ENCODE measurements at regions of chr17 and their contacts with region 1.

Region 1: DNA sequence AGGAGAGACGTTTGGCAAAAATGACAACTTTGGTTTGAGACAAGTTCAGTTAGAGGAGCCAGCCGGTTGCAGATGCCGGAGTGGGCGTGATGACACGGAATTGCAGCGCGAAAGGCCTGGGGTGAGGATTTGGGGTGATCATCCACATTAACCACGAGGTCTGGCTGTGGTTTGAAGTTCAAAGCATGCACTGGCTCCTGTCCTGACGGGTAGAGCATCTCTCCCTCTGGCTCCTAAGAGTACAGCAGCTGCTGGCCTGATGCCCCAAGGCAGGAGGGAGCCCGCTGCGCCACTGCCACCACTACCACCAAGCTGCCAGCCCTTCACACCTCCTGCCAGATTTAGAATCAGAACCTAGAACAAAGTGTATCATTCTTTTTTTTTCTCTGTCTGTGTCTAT is 3.7 kb downstream of the RHBDL3 start:
- DNase-seq: no peak
- H3K4me3 ChIP-seq: no peak overlapping the region
- H3K27ac ChIP-seq: no peak overlapping the region
- H3K4me1 ChIP-seq: peaks cover 10% of the 10 kb centered on the region
- H3K27me3 ChIP-seq: peaks cover 47 to 56% of the 10 kb centered on the region in 2 experiments
- CTCF ChIP-seq: no peak
- POLR2A ChIP-seq: no peak

Region 2: GRCh38 chr17:32285746-32286517 is 16.6 kb after region 1 on chr17:
- CTCF ChIA-PET with region 1: interaction called, 14 read pairs
- POLR2A ChIA-PET with region 1: no interaction called
- dilution Hi-C with region 1: no loop called
- intact Hi-C with region 1: no loop called
- DNase-seq: no peak
- H3K4me3 ChIP-seq: no peak overlapping the region
- H3K27ac ChIP-seq: no peak overlapping the region
- H3K4me1 ChIP-seq: peaks cover 9% of the 10 kb centered on the region
- H3K27me3 ChIP-seq: peaks cover 0 to 2% of the 10 kb centered on the region in 2 experiments
- CTCF ChIP-seq: no peak
- POLR2A ChIP-seq: no peak

Measured in endothelial cell of umbilical vein (primary cell).